Psoas muscle (tissue), 8 donors: ENCODE measurements at regions of chr22 and their contacts with region 1.

Region 1: GRCh38 chr22:19122143-19122751 is at the start of gene DGCR2:
- DNase-seq: peak; percentile 97 to 99
- ATAC-seq: peak; percentile 93 to 95 (median 94)
- H3K4me3 ChIP-seq: peak within 1 kb of the TSS; percentile 90
- H3K27ac ChIP-seq: peak within 1 kb of the TSS; percentile 93
- H3K4me1 ChIP-seq: peaks cover 48% of the 10 kb centered on the region
- H3K27me3 ChIP-seq: no peaks in the 10 kb centered on the region
- CTCF ChIP-seq: no peak
- total RNA-seq, gene DGCR2: 13.1 to 27.6 (median 25.9) TPM

Region 2: GRCh38 chr22:19085233-19085718 is 37.0 kb before region 1 on chr22:
- intact Hi-C with region 1: loop called in 1 of 2 experiments (anchors 5 kb)
- DNase-seq: no peak
- ATAC-seq: peak; percentile 72 to 83 (median 78)
- H3K4me3 ChIP-seq: no peak overlapping the region
- H3K27ac ChIP-seq: peak overlapping the region; percentile 47
- H3K4me1 ChIP-seq: peaks cover 31% of the 10 kb centered on the region
- H3K27me3 ChIP-seq: no peaks in the 10 kb centered on the region
- CTCF ChIP-seq: no peak

Region 3: DNA sequence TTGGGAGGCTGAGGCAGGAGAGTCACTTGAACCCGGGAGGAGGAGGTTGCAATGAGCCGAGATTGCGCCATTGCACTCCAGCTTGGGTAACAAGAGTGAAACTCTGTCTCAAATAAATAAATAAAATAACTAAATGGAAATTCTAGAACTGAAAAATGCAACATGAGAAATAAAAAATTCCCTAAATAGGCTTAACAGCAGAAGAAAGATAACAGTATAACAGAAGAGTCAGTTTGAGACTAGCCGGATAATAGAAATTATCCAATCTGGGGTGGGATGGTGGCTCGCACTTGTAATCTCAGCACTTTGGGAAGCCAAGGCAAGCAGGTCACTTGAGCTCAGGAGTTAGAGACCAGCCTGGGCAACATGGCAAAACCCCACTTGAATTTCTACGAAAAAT is 42.2 kb after region 1 on chr22:
- intact Hi-C with region 1: no loop called
- DNase-seq: no peak
- ATAC-seq: no peak
- H3K4me3 ChIP-seq: no peak overlapping the region
- H3K27ac ChIP-seq: no peak overlapping the region
- H3K4me1 ChIP-seq: peaks cover under 1% of the 10 kb centered on the region
- H3K27me3 ChIP-seq: peaks cover 0 to 49% (median 13%) of the 10 kb centered on the region in 3 donors
- CTCF ChIP-seq: no peak

Region 4: DNA sequence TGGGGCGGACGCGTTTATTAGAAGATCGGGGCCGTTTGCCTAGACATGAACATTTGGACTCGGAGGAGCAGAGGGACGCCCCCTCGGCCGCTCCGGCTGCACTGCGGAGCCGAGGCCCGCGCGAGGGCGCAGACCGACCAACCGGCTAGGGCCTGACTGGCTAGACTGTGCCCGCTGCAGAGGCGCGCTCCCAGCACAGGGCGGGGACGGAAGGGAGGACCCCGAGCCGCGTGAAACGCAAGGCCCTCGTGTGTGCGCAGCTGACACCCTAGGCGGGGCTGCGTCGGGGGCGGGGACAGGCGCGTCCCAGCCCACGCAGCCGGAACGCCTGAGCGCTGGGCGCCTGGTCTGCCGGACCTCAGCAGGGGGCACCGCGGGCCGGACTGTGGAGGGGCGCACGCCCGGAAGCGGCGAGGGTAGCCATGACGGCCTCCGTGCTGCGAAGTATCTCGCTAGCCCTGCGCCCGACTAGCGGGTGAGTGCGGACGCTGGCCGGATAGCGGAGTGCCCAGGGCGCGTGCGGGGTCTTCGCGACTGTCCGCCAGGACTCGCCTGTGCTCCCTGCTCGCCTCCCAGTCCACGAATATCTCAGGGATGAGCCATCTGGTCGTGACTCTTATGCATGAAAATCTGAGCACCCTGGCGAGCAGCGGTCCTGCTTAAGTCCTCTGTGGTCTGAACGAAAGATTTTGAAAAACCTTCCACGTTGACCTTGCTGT is 310.0 kb after region 1 on chr22 and contains the start of gene MRPL40:
- intact Hi-C with region 1: loop called in 1 of 2 experiments (anchors 1 kb)
- DNase-seq: peak; percentile 97 to 98
- ATAC-seq: peak; percentile 91 to 96 (median 92)
- H3K4me3 ChIP-seq: peak within 1 kb of the TSS; percentile 97
- H3K27ac ChIP-seq: peak within 1 kb of the TSS; percentile 96
- H3K4me1 ChIP-seq: peaks cover 30% of the 10 kb centered on the region
- H3K27me3 ChIP-seq: no peaks in the 10 kb centered on the region
- CTCF ChIP-seq: peak; percentile 8
- total RNA-seq, gene MRPL40: 53.7 to 70.5 (median 58.2) TPM